ENCODE measurements at regions of chr5 and their contacts with region 1.

Region 1: DNA sequence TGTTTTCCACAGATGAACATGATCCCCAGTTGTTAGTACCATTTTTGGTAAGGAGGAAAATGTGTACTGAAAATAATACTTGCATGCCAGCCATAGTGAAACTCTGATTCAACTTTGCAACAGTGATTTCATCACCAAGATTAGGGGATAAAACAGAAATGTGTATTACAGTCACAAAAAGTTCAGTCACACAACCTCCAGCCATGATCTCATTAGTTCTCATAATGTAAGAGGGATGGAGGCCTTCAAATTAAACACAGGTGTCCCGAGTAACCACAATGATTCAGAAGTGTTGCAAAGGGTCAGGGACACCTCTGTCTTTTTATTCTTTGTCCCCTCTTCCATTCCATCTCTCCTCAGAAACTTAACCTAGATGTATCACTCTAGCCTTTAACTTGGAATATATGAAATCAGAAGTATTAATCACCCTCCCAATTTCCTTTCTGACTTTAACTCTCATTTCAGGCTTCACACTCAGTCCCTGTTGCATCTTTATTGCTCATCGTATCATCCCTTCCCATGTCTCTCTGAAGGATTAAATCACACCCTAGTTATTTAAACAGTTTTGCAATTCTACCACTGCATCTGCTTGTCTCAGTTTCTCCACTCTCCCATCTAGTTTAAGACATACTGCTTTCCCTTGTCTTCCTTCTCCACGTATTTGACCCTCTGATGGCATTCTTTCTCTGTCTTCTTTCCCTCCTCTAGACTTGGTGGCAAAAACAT is 291.2 kb downstream of the ADAMTS6 start:
- DNase-seq: no peak
- ATAC-seq: peak; percentile 48
- H3K4me3 ChIP-seq: no peak overlapping the region
- H3K27ac ChIP-seq: peak overlapping the region in 1 of 2 donors; percentile 40
- H3K4me1 ChIP-seq: no peaks in the 10 kb centered on the region
- H3K27me3 ChIP-seq: no peaks in the 10 kb centered on the region

Region 2: DNA sequence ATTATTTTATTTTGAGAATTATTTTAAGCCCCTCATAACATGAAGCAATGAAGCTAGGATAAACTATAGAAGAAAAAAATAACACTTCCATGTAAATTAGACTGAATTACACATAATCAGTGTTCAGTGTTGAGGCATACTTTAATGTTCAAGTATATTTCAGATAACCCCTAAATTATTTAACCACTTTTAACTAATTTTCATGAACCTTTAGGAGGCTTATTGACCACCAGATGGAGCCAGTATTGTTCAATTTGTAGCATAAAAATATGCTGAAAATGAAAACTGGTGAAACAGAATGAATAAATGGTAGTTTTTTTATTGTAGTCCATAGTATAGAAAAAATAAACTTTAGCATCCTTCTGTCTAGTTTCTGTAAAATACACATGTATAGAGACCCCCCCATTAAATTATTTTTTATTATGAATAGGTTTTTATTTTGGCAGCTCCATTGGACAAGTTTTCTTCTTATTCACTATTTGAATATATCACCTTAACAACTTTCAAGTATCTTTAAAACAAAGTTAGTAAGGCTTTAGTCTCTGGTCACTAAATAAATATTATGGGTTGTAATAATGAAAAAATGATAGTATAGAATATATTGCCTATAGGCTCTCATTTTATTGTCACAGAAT is 231.6 kb before region 1 on chr5:
- intact Hi-C with region 1: no loop called
- DNase-seq: no peak
- ATAC-seq: no peak
- H3K4me3 ChIP-seq: no peak overlapping the region
- H3K27ac ChIP-seq: no peak overlapping the region
- H3K4me1 ChIP-seq: peaks cover 0 to 2% of the 10 kb centered on the region in 2 donors
- H3K27me3 ChIP-seq: no peaks in the 10 kb centered on the region

Region 3: GRCh38 chr5:65137631-65138030 is 52.9 kb before region 1 on chr5:
- intact Hi-C with region 1: loop called in 1 of 2 experiments (anchors 5 kb)
- DNase-seq: no peak
- ATAC-seq: peak; percentile 49
- H3K4me3 ChIP-seq: no peak overlapping the region
- H3K27ac ChIP-seq: no peak overlapping the region
- H3K4me1 ChIP-seq: peaks cover 5 to 7% of the 10 kb centered on the region in 2 donors
- H3K27me3 ChIP-seq: no peaks in the 10 kb centered on the region